ENCODE measurements at regions of chr15 and their contacts with region 1.

Region 1: DNA sequence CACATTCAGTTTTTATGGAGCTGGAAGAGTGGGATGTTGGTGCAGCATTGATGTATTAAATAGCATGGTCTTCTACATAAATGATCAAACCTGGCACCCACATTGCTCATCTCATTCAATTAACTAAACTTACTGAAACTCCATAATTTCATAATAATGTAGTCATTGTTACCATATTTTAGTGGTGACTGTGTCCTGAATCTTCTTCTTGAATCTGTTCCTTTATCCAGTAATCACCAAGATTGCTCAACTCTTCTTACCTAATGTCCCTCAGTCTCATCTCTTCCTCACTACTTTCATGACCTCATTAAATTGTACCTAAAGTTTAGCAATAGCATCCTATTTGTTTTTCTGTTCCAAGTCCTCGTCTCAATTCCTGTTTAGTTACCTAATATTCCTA is 69.8 kb downstream of the FGF7 start:
- DNase-seq: peak; percentile 90
- H3K4me3 ChIP-seq: no peak overlapping the region
- H3K27ac ChIP-seq: no peak overlapping the region
- H3K4me1 ChIP-seq: no peaks in the 10 kb centered on the region
- H3K27me3 ChIP-seq: no peaks in the 10 kb centered on the region
- CTCF ChIP-seq: no peak

Region 2: DNA sequence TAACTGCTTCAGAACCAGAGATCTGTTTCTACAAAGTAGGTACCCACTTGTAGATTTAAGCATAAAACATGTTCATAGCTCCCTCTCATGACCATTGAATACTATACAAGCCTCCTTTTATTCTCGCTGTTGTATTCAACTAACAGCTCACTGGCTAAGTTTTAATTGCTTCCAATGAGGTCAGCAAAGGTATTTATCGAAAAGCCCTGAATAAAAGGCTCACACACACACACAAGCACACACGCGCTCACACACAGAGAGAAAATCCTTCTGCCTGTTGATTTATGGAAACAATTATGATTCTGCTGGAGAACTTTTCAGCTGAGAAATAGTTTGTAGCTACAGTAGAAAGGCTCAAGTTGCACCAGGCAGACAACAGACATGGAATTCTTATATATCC is 69.8 kb before region 1 on chr15 and contains the start of gene FGF7:
- CTCF ChIA-PET with region 1: no interaction called
- dilution Hi-C with region 1: no loop called
- in situ Hi-C with region 1: no loop called
- intact Hi-C with region 1: no loop called
- DNase-seq: no peak
- H3K4me3 ChIP-seq: peak within 1 kb of the TSS in 1 of 3 experiments; percentile 33
- H3K27ac ChIP-seq: no peak within 1 kb of the TSS
- H3K4me1 ChIP-seq: no peaks in the 10 kb centered on the region
- H3K27me3 ChIP-seq: peaks cover 5% of the 10 kb centered on the region
- CTCF ChIP-seq: no peak
- total RNA-seq, gene FGF7: 0.50 TPM in 1 of 2 donors, not detected in the other

Region 3: GRCh38 chr15:49538520-49538919 is 45.7 kb after region 1 on chr15:
- CTCF ChIA-PET with region 1: no interaction called
- dilution Hi-C with region 1: loop called (anchors 5 kb)
- in situ Hi-C with region 1: no loop called
- intact Hi-C with region 1: no loop called
- DNase-seq: no peak
- H3K4me3 ChIP-seq: no peak overlapping the region
- H3K27ac ChIP-seq: no peak overlapping the region
- H3K4me1 ChIP-seq: no peaks in the 10 kb centered on the region
- H3K27me3 ChIP-seq: no peaks in the 10 kb centered on the region
- CTCF ChIP-seq: no peak

Region 4: GRCh38 chr15:49558924-49559323 is 66.1 kb after region 1 on chr15:
- CTCF ChIA-PET with region 1: no interaction called
- dilution Hi-C with region 1: no loop called
- in situ Hi-C with region 1: no loop called
- intact Hi-C with region 1: no loop called
- DNase-seq: no peak
- H3K4me3 ChIP-seq: no peak overlapping the region
- H3K27ac ChIP-seq: no peak overlapping the region
- H3K4me1 ChIP-seq: no peaks in the 10 kb centered on the region
- H3K27me3 ChIP-seq: no peaks in the 10 kb centered on the region
- CTCF ChIP-seq: no peak